ENCODE measurements at regions of chr1 and their contacts with region 1.

Region 1: GRCh38 chr1:218439541-218440295 is 94.6 kb downstream of the TGFB2 start:
- DNase-seq: no peak
- ATAC-seq: no peak
- H3K4me3 ChIP-seq: no peak overlapping the region
- H3K4me1 ChIP-seq: no peaks in the 10 kb centered on the region
- CTCF ChIP-seq: no peak

Region 2: GRCh38 chr1:218409946-218410510 is 29.7 kb before region 1 on chr1:
- intact Hi-C with region 1: loop called in 1 of 2 experiments (anchors 2 kb)
- DNase-seq: no peak
- ATAC-seq: no peak
- H3K4me3 ChIP-seq: no peak overlapping the region
- H3K4me1 ChIP-seq: no peaks in the 10 kb centered on the region
- CTCF ChIP-seq: no peak